Activated CD4-positive, alpha-beta T cell treated with anti-CD3 and anti-CD28 coated beads for 36 hours (primary cell): ENCODE measurements at regions of chr7 and their contacts with region 1.

Region 1: GRCh38 chr7:94111009-94111408 is 106.9 kb upstream of the BET1 start:
- DNase-seq: no peak
- ATAC-seq: no peak
- H3K4me3 Mint-ChIP-seq: no peak overlapping the region
- H3K27ac Mint-ChIP-seq: no peak overlapping the region
- H3K4me1 Mint-ChIP-seq: no peaks in the 10 kb centered on the region
- H3K27me3 Mint-ChIP-seq: peaks cover 3% of the 10 kb centered on the region

Region 2: DNA sequence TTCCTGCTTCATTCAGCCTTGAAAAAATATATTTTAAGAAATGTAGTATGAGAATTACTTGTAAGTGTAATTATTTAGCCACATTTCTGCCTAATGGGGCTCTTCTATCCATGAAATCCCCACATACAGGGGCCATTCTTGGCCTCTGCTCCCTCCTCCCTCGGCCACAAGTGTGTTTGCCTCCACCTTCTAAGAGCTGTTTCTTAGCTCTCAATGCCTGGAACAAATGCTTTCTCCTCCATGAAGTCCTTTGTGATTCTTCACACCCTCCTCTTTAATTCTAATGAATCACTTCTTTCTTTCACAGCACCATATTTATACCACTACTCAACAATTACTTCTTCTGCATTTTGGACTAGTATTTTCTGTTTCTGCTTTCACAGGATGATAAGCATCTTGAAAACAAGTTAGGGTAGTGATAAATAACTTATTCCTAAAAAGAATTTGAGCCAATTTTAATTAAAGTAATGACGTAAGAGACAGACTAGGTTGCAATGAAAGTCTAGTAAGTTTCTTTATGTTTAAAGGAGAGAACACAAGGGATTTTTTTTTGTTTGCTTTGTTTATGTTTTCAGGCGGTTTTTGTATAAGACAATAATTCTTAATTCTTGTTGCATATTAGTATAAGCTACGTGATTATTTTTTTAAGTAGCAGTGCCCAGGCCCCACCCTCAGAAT is 17.9 kb before region 1 on chr7:
- CTCF ChIA-PET with region 1: interaction called, 3 read pairs
- POLR2A ChIA-PET with region 1: no interaction called
- intact Hi-C with region 1: loop called in 1 of 2 experiments (anchors 2 kb)
- DNase-seq: no peak
- ATAC-seq: no peak
- H3K4me3 Mint-ChIP-seq: no peak overlapping the region
- H3K27ac Mint-ChIP-seq: no peak overlapping the region
- H3K4me1 Mint-ChIP-seq: peaks cover 5% of the 10 kb centered on the region
- H3K27me3 Mint-ChIP-seq: peaks cover 19% of the 10 kb centered on the region